Activated naive CD4-positive, alpha-beta T cell treated with anti-CD3 and anti-CD28 coated beads, Interleukin-2, amount 10 ng/mL, durations not matched to agents 7 days and 5 days (primary cell): ENCODE measurements at regions of chr2 and their contacts with region 1.

Region 1: GRCh38 chr2:157876066-157876787 is at the start of gene ACVR1:
- DNase-seq: peak; percentile 92
- H3K4me3 Mint-ChIP-seq: peak within 1 kb of the TSS; percentile 89
- H3K27ac Mint-ChIP-seq: peak within 1 kb of the TSS; percentile 89
- H3K4me1 Mint-ChIP-seq: peaks cover 65% of the 10 kb centered on the region
- H3K27me3 Mint-ChIP-seq: no peaks in the 10 kb centered on the region

Region 2: DNA sequence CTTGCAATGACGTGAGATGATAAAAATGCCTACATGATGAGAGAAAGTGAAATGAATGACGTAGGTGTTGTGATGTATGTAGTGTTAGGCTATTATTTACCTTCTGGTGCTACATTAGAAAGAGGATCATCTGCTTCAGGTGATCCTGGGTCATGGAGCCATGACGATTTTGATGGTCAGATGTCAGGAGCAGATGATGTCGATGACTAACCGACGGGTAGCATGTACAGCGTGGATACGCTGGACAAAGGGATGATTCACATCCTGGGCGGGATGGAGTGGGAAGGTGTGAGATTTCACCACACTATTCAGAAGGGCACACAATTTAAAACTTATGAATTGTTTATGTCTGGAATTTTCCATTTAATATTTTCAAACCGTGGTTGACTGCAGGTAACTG is 204.1 kb before region 1 on chr2:
- CTCF ChIA-PET with region 1: no interaction called
- DNase-seq: no peak
- H3K4me3 Mint-ChIP-seq: no peak overlapping the region
- H3K27ac Mint-ChIP-seq: no peak overlapping the region
- H3K4me1 Mint-ChIP-seq: no peaks in the 10 kb centered on the region
- H3K27me3 Mint-ChIP-seq: no peaks in the 10 kb centered on the region

Region 3: GRCh38 chr2:157898591-157898996 is 22.4 kb after region 1 on chr2:
- CTCF ChIA-PET with region 1: interaction called, 22 read pairs
- DNase-seq: peak; percentile 65
- H3K4me3 Mint-ChIP-seq: peak overlapping the region; percentile 78
- H3K27ac Mint-ChIP-seq: peak overlapping the region; percentile 100
- H3K4me1 Mint-ChIP-seq: peaks cover 86% of the 10 kb centered on the region
- H3K27me3 Mint-ChIP-seq: no peaks in the 10 kb centered on the region